Naive thymus-derived CD4-positive, alpha-beta T cell (primary cell): ENCODE measurements at regions of chr11 and their contacts with region 1.

Region 1: DNA sequence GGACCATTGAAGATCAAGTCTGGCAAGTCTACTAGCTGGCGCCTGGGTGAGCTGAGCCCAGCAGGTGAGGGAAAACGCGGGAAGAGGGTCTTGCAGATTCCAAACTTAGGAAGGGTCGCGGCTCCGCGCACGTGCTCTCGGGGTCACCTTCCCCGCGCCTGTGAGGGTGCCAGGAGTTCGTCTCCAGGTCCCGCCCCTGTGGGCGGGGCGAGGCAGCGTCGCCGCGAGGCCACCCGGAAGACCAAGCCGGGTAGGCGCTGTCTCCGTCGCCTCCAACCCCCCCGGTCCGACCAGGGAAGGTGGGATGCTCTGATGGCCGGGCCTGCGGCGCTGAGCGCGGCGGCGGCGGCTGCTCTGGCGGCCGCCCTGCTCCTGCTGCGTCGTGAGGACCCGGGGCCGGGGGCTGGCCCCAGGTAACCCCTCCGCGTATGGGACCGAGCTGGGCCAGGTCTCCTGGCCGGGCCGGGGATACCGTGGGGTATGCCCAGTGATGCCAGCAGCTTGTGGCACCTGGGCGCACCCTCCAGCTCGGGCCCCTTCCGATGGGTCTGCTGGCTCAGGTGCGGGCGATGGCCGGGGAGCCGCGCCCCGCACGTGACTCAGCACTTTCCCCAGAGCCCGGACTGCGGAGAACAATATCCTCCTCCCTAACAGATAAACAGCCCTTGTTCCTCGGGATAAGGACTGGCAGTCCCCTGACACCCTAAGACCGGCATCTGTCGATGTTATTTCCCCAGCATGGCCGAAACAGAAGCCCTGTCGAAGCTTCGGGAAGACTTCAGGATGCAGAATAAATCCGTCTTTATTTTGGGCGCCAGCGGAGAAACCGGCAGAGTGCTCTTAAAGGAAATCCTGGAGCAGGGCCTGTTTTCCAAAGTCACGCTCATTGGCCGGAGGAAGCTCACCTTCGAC is at the start of gene HTATIP2:
- DNase-seq: peak; percentile 62 to 78 (median 72)
- ATAC-seq: peak; percentile 92
- H3K4me3 ChIP-seq: peak within 1 kb of the TSS; percentile 73
- H3K4me3 Mint-ChIP-seq: peak within 1 kb of the TSS; percentile 88 to 96 (median 94)
- H3K27ac ChIP-seq: peak within 1 kb of the TSS; percentile 77
- H3K27ac Mint-ChIP-seq: peak within 1 kb of the TSS; percentile 87 to 97 (median 93)
- H3K4me1 ChIP-seq: peaks cover 27 to 29% of the 10 kb centered on the region in 2 donors
- H3K4me1 Mint-ChIP-seq: peaks cover 33 to 75% (median 72%) of the 10 kb centered on the region in 7 donors
- H3K27me3 ChIP-seq: no peaks in the 10 kb centered on the region
- H3K27me3 Mint-ChIP-seq: no peaks in the 10 kb centered on the region
- total RNA-seq, gene HTATIP2: 12.0 to 47.1 (median 38.6) TPM

Region 2: GRCh38 chr11:19240420-19241259 is 1123.1 kb before region 1 on chr11 and contains the start of gene E2F8:
- CTCF ChIA-PET with region 1: no interaction called
- POLR2A ChIA-PET with region 1: no interaction called
- intact Hi-C with region 1: loop called in 1 of 2 experiments (anchors 5 kb)
- DNase-seq: peak; percentile 42 to 95 (median 62)
- ATAC-seq: peak; percentile 86
- H3K4me3 ChIP-seq: peak within 1 kb of the TSS; percentile 75
- H3K4me3 Mint-ChIP-seq: peak within 1 kb of the TSS; percentile 73 to 97 (median 85)
- H3K27ac ChIP-seq: no peak within 1 kb of the TSS
- H3K27ac Mint-ChIP-seq: peak within 1 kb of the TSS in 2 of 9 donors; percentile 41 to 85
- H3K4me1 ChIP-seq: peaks cover 12 to 13% of the 10 kb centered on the region in 2 donors
- H3K4me1 Mint-ChIP-seq: peaks cover 8 to 49% (median 22%) of the 10 kb centered on the region in 7 donors
- H3K27me3 ChIP-seq: peaks cover 8 to 25% of the 10 kb centered on the region in 2 donors
- H3K27me3 Mint-ChIP-seq: peaks cover 6 to 43% (median 35%) of the 10 kb centered on the region in 5 donors
- total RNA-seq, gene E2F8: 0.17 to 25.4 TPM in 2 of 5 experiments, not detected in the others

Region 3: DNA sequence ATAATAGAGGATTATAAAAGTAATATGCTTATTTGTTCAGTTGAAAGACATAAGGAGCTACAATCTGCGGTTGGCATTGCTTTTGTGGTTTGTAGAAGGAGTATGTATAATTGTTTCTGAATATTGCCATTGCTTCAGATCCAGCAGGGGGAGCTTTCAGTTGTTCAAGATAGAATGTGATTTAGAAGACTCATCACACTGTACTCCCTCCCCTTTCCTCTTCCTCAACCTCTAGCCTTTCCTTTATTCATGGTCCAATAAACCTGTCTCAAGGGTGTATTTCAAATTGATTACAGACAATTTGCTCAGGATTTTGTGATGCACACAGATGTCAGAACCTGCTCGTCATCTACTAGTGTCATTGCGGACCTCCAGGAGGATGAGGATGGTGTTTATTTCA is 33.5 kb after region 1 on chr11:
- CTCF ChIA-PET with region 1: no interaction called
- POLR2A ChIA-PET with region 1: no interaction called
- intact Hi-C with region 1: no loop called
- DNase-seq: peak in 7 of 9 donors; percentile 12 to 53 (median 31)
- ATAC-seq: peak; percentile 82
- H3K4me3 ChIP-seq: no peak overlapping the region
- H3K4me3 Mint-ChIP-seq: no peak overlapping the region
- H3K27ac ChIP-seq: no peak overlapping the region
- H3K27ac Mint-ChIP-seq: peak overlapping the region in 1 of 9 donors; percentile 19
- H3K4me1 ChIP-seq: peaks cover 0 to 6% of the 10 kb centered on the region in 2 donors
- H3K4me1 Mint-ChIP-seq: peaks cover 1 to 23% (median 16%) of the 10 kb centered on the region in 7 donors
- H3K27me3 ChIP-seq: no peaks in the 10 kb centered on the region
- H3K27me3 Mint-ChIP-seq: no peaks in the 10 kb centered on the region